Activated T-helper 1 cell treated with anti-CD3 and anti-CD28 coated beads, Interleukin-12 subunit alpha, Interleukin-12 subunit beta, Interleukin-2, Interleukin-4 antibody, amounts not matched to agents 30 ng/mL and 10 ng/mL and 1 ng/mL, durations not matched to agents 14 hours and 24 hours and 36 hours (primary cell): ENCODE measurements at regions of chr11 and their contacts with region 1.

Region 1: DNA sequence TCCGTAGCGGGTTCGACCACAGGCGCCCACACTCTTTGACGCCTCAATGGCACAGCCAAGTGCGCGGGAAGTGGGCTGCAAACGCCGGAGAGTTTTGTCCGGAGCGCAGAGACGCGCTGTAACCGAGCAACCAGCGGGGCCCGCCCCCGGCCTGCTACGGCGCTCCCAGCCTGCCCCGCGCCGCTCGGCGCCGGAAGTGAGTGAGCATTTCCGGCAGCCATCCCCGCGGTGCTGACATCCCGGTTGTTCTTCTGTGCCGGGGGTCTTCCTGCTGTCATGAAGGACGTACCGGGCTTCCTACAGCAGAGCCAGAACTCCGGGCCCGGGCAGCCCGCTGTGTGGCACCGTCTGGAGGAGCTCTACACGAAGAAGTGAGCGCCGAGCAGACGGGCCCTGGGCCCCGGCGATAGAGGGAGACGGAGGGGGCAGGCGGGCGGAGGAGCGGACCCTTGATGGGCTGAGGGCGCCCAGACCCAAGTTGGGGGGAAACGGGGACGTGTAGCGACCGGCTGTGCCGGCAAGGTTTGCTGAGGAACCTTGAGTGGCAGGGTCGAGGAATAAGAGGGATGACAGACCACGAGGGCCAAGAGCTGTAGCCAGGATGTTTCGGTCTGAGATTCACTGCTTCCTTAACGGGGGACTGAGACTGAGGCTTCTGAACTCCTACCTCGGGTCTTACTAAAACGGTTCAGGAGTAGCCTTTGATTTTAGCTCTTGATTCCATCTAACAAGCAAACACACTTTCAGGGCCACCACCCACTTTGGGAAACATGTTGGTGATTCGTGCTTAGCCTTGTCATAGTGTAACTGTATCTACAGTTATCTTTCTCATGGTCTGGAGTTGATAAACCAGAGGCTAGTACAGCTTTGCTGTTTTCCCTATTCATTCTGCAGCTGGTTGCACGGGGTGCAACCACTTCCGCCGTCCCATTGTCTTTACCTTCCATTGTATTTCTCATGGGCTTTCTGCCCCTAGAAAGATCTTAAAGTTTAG is at the start of gene PSMD13:
- DNase-seq: peak; percentile 84
- H3K4me3 Mint-ChIP-seq: peak within 1 kb of the TSS; percentile 97
- H3K27ac Mint-ChIP-seq: peak within 1 kb of the TSS; percentile 98
- H3K4me1 Mint-ChIP-seq: peaks cover 46% of the 10 kb centered on the region
- H3K27me3 Mint-ChIP-seq: peaks cover 2% of the 10 kb centered on the region
- total RNA-seq, gene PSMD13: 261 and 266 TPM in 2 replicates

Region 2: GRCh38 chr11:207208-207862 is 29.7 kb before region 1 on chr11 and contains the starts of genes BET1L and RIC8A:
- intact Hi-C with region 1: loop called (anchors 1 kb)
- DNase-seq: peak; percentile 97
- H3K4me3 Mint-ChIP-seq: peak within 1 kb of the TSS; percentile 89
- H3K27ac Mint-ChIP-seq: peak within 1 kb of the TSS; percentile 98
- H3K4me1 Mint-ChIP-seq: peaks cover 55% of the 10 kb centered on the region
- H3K27me3 Mint-ChIP-seq: no peaks in the 10 kb centered on the region
- total RNA-seq, gene BET1L: 42.0 and 48.7 TPM in 2 replicates
- total RNA-seq, gene RIC8A: 132 and 149 TPM in 2 replicates

Region 3: DNA sequence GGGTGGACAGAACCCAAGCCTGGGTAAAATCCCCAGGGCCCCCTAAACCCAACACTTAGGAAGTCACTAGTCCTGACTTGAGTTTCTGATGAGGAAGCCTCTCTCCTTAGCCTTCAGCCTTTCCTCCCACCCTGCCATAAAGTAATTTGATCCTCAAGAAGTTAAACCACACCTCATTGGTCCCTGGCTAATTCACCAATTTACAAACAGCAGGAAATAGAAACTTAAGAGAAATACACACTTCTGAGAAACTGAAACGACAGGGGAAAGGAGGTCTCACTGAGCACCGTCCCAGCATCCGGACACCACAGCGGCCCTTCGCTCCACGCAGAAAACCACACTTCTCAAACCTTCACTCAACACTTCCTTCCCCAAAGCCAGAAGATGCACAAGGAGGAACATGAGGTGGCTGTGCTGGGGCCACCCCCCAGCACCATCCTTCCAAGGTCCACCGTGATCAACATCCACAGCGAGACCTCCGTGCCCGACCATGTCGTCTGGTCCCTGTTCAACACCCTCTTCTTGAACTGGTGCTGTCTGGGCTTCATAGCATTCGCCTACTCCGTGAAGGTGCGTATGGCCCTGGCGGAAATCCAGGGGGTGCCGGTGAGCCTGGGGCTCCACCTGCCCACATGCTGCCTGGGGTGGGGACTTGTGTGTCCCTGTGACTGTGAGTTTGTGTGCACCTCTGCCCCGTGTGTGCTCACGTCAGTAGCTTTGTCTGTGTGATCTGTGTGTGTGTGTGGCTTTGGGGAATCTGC is 76.9 kb after region 1 on chr11 and contains the start of gene IFITM1:
- intact Hi-C with region 1: loop called (anchors 2 kb)
- DNase-seq: peak; percentile 64
- H3K4me3 Mint-ChIP-seq: peak within 1 kb of the TSS; percentile 93
- H3K27ac Mint-ChIP-seq: peak within 1 kb of the TSS; percentile 96
- H3K4me1 Mint-ChIP-seq: peaks cover 44% of the 10 kb centered on the region
- H3K27me3 Mint-ChIP-seq: no peaks in the 10 kb centered on the region
- total RNA-seq, gene IFITM1: 208 and 214 TPM in 2 replicates

Region 4: GRCh38 chr11:406978-407739 is 170.1 kb after region 1 on chr11:
- intact Hi-C with region 1: loop called (anchors 2 kb)
- DNase-seq: peak; percentile 84
- H3K4me3 Mint-ChIP-seq: no peak overlapping the region
- H3K27ac Mint-ChIP-seq: peak overlapping the region; percentile 23
- H3K4me1 Mint-ChIP-seq: no peaks in the 10 kb centered on the region
- H3K27me3 Mint-ChIP-seq: peaks cover 2% of the 10 kb centered on the region

Region 5: GRCh38 chr11:447923-448731 is 211.1 kb after region 1 on chr11:
- intact Hi-C with region 1: loop called (anchors 1 kb)
- DNase-seq: peak; percentile 92
- H3K4me3 Mint-ChIP-seq: peak overlapping the region; percentile 88
- H3K27ac Mint-ChIP-seq: peak overlapping the region; percentile 91
- H3K4me1 Mint-ChIP-seq: peaks cover 16% of the 10 kb centered on the region
- H3K27me3 Mint-ChIP-seq: no peaks in the 10 kb centered on the region